Mammary epithelial cell (primary cell): ENCODE measurements at regions of chr15 and their contacts with region 1.

Region 1: GRCh38 chr15:71575474-71576045 is 234.8 kb upstream of the NR2E3 start:
- DNase-seq: no peak
- H3K4me3 ChIP-seq: no peak overlapping the region
- H3K27ac ChIP-seq: no peak overlapping the region
- H3K4me1 ChIP-seq: peaks cover 18% of the 10 kb centered on the region
- H3K27me3 ChIP-seq: no peaks in the 10 kb centered on the region
- CTCF ChIP-seq: peak; percentile 59 to 66

Region 2: GRCh38 chr15:71538181-71538580 is 37.4 kb before region 1 on chr15:
- CTCF ChIA-PET with region 1: no interaction called
- dilution Hi-C with region 1: no loop called
- in situ Hi-C with region 1: no loop called
- intact Hi-C with region 1: loop called (anchors 5 kb)
- DNase-seq: peak; percentile 79
- H3K4me3 ChIP-seq: no peak overlapping the region
- H3K27ac ChIP-seq: peak overlapping the region; percentile 19
- H3K4me1 ChIP-seq: peaks cover 14% of the 10 kb centered on the region
- H3K27me3 ChIP-seq: no peaks in the 10 kb centered on the region
- CTCF ChIP-seq: no peak

Region 3: DNA sequence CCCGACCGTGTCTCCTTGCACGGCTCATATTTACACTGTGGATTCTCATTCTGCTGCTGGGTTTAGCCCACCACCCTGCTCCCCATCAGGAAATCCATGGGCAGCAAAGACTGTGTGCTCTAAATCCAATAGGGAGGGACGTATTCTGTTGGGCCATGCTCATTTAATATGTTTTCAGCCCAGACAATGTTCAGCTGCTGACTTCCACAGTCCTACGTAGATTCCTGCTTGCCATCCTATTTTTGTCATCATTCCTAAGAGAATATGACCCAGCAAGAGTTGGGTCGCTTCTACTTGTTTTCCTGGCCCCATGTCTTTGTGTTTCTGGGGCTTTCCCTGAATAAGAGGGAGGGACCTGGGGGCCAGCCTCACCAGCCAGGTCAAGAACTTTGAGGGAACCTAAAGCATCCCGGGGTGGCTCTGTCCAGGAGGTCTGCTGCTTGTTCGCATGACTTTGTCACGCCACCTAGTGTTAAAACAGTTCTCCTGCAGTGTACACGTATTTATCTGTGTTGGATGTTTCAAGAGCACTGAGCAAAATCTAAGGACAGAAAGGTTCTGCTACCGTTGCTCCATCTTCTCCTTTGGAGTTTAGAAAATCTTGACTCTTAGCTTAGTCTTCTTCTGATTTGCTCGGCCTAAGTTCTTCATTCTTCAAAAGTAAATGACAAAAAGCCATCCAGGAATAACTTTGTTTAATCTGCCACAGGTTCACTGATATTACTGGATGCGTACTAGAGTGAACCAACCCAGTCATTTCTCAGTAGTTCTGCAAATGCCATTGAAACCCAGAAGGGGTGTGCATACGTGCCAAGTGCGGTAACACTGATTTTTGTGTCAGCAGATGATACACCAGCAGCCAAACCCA is 155.0 kb after region 1 on chr15:
- CTCF ChIA-PET with region 1: no interaction called
- dilution Hi-C with region 1: no loop called
- in situ Hi-C with region 1: no loop called
- intact Hi-C with region 1: loop called (anchors 1 kb)
- DNase-seq: peak; percentile 45
- H3K4me3 ChIP-seq: no peak overlapping the region
- H3K27ac ChIP-seq: no peak overlapping the region
- H3K4me1 ChIP-seq: no peaks in the 10 kb centered on the region
- H3K27me3 ChIP-seq: no peaks in the 10 kb centered on the region
- CTCF ChIP-seq: peak; percentile 75 to 81